Activated CD4-positive, alpha-beta memory T cell treated with anti-CD3 and anti-CD28 coated beads, Interleukin-2, amount 10 ng/mL, durations not matched to agents 7 days and 5 days (primary cell): ENCODE measurements at regions of chr1 and their contacts with region 1.

Region 1: GRCh38 chr1:168342572-168343280 is 62.0 kb downstream of the TBX19 start:
- DNase-seq: peak; percentile 92
- H3K4me3 Mint-ChIP-seq: no peak overlapping the region
- H3K27ac Mint-ChIP-seq: peak overlapping the region; percentile 75
- H3K4me1 Mint-ChIP-seq: peaks cover 82% of the 10 kb centered on the region
- H3K27me3 Mint-ChIP-seq: peaks cover 3% of the 10 kb centered on the region

Region 2: GRCh38 chr1:168234846-168235547 is 107.7 kb before region 1 on chr1:
- CTCF ChIA-PET with region 1: interaction called, 80 read pairs
- POLR2A ChIA-PET with region 1: interaction called, 17 read pairs
- DNase-seq: peak; percentile 65
- H3K4me3 Mint-ChIP-seq: no peak overlapping the region
- H3K27ac Mint-ChIP-seq: peak overlapping the region; percentile 68
- H3K4me1 Mint-ChIP-seq: peaks cover 64% of the 10 kb centered on the region
- H3K27me3 Mint-ChIP-seq: no peaks in the 10 kb centered on the region

Region 3: GRCh38 chr1:168365719-168366479 is 23.2 kb after region 1 on chr1:
- CTCF ChIA-PET with region 1: interaction called, 263 read pairs
- POLR2A ChIA-PET with region 1: interaction called, 64 read pairs
- DNase-seq: no peak
- H3K4me3 Mint-ChIP-seq: no peak overlapping the region
- H3K27ac Mint-ChIP-seq: no peak overlapping the region
- H3K4me1 Mint-ChIP-seq: peaks cover 48% of the 10 kb centered on the region
- H3K27me3 Mint-ChIP-seq: peaks cover 5% of the 10 kb centered on the region

Region 4: DNA sequence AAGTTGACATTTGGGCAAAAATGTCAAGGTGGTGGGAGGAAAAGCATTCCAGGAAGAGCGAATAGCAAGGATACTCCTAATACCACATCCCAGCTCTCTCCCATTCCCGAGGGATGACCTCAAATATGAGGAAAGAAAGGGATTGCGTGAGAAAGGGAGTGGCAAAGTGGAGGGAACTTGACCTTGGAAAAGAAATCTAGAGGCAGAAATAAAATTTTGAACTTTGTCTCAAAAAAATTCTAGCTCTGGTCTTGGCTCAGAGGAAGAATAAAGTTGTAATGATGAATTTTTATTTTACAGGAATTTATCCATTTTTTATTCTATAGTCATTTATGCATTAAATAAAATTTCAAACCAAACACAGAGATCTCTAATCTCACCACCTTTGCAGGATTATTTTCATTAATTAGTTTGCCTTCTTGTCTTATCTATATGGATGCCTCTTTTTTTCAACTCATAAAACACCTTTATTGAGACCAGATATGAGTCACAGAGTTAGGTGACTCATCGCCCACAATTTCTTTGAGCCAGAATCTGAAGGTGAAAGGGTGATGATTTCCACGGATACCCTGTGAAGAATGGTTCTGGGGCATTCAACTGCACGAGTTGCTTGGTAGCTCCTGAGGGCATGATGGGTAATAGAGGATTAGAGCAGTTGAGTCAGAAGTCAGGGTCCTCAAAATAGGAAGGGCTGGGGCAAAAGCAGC is 66.0 kb after region 1 on chr1:
- CTCF ChIA-PET with region 1: interaction called, 21 read pairs
- POLR2A ChIA-PET with region 1: interaction called, 3 read pairs
- DNase-seq: peak; percentile 73
- H3K4me3 Mint-ChIP-seq: peak overlapping the region; percentile 26
- H3K27ac Mint-ChIP-seq: peak overlapping the region; percentile 86
- H3K4me1 Mint-ChIP-seq: peaks cover 56% of the 10 kb centered on the region
- H3K27me3 Mint-ChIP-seq: no peaks in the 10 kb centered on the region

Region 5: DNA sequence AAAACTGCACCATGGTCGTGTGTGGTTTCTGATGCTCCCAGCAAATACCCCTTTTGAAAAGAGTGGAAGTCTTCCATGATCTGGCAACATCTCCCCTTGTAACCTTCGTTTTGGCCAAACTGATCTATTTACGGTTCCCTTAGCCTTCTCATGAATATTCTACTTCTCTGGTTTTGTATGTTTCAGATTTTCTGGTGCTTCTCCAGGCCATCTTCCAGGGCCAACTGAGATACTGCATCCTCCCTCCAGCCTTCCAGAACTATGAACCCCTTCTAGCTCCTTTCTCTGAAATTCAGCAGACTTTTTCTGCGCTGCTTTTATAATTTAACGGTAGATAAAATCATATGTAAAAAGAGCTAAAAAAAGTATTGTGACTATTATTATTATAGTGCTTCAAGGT is 103.4 kb after region 1 on chr1:
- CTCF ChIA-PET with region 1: interaction called, 272 read pairs
- POLR2A ChIA-PET with region 1: interaction called, 25 read pairs
- DNase-seq: no peak
- H3K4me3 Mint-ChIP-seq: no peak overlapping the region
- H3K27ac Mint-ChIP-seq: no peak overlapping the region
- H3K4me1 Mint-ChIP-seq: peaks cover 39% of the 10 kb centered on the region
- H3K27me3 Mint-ChIP-seq: no peaks in the 10 kb centered on the region

Region 6: GRCh38 chr1:168582693-168583336 is 240.1 kb after region 1 on chr1:
- CTCF ChIA-PET with region 1: interaction called, 12 read pairs
- POLR2A ChIA-PET with region 1: no interaction called
- DNase-seq: no peak
- H3K4me3 Mint-ChIP-seq: no peak overlapping the region
- H3K27ac Mint-ChIP-seq: no peak overlapping the region
- H3K4me1 Mint-ChIP-seq: no peaks in the 10 kb centered on the region
- H3K27me3 Mint-ChIP-seq: no peaks in the 10 kb centered on the region